BJ (cell line): ENCODE measurements at regions of chr2 and their contacts with region 1.

Region 1: GRCh38 chr2:46041434-46041833 is 255.8 kb upstream of the EPAS1 start:
- DNase-seq: peak; percentile 55
- H3K4me3 ChIP-seq: no peak overlapping the region
- H3K27me3 ChIP-seq: no peaks in the 10 kb centered on the region
- CTCF ChIP-seq: no peak

Region 2: DNA sequence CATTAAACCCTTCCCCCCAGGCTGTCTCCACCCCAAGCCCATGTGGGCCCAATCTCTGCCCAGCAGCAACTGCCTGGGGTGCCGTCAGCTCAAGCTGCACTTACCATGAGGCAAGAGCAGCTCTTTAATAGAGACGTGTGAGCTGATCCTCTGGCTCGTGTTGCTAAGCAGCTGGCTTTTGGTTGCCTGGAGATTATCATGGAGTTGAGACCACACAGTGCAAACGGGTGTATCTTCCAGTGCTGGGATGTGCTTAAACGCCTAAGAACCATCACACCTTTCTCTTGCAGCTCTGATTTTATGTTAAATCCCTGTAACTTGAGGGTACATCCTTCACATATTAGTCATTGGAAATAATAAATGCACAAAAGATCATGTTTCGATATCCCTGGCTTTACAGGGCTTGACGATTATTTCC is 118.9 kb before region 1 on chr2:
- CTCF ChIA-PET with region 1: no interaction called
- POLR2A ChIA-PET with region 1: no interaction called
- DNase-seq: no peak
- H3K4me3 ChIP-seq: no peak overlapping the region
- H3K27me3 ChIP-seq: no peaks in the 10 kb centered on the region
- CTCF ChIP-seq: no peak

Region 3: DNA sequence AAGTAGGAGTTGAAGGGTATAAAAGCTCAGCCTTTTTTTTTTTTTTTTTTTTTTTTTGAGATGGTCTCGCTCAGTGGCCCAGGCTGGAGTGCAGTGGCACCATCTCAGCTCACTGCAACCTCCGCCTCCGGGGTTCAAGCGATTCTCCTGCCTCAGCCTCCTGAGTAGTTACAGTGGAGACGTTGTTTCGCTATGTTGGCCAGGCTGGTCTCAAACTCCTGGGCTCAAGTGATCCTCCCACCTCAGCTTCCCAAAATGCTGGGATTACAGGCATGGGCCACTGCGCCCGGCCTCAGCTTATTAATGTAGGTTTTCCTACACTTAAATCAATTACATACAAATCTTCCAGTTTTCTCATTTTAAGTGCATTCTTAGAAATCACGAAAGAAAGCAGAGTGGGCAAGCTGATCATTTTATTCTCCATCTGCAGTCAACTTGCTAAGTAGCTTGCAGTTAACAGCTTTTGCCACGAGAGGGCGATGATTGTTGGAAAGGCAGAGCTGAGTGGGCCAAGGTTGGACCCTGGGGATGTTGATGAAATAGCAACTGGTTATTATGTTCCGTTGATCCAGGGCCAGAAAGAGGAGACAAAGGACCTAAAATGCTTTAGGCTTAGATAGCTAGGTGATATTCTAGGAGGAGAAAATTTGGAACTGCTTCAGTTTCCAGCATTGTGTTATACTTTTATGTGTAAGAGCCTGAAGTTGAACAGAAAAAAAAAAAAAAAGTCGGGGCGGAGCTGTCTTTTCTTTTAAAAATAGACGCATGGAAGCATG is 21.4 kb after region 1 on chr2:
- CTCF ChIA-PET with region 1: interaction called, 16 read pairs
- POLR2A ChIA-PET with region 1: no interaction called
- DNase-seq: no peak
- H3K4me3 ChIP-seq: no peak overlapping the region
- H3K27me3 ChIP-seq: no peaks in the 10 kb centered on the region
- CTCF ChIP-seq: peak; percentile 89